Calu3 (cell line): ENCODE measurements at regions of chr20 and their contacts with region 1.

Region 1: GRCh38 chr20:64106981-64107735 is at the start of gene NPBWR2:
- DNase-seq: no peak
- H3K4me3 Mint-ChIP-seq: no peak within 1 kb of the TSS
- H3K27ac Mint-ChIP-seq: no peak within 1 kb of the TSS
- H3K4me1 Mint-ChIP-seq: no peaks in the 10 kb centered on the region
- H3K27me3 Mint-ChIP-seq: peaks cover 94% of the 10 kb centered on the region
- CTCF ChIP-seq: no peak
- total RNA-seq, gene NPBWR2: not detected in 2 replicates

Region 2: GRCh38 chr20:62539198-62540045 is 1567.7 kb before region 1 on chr20:
- CTCF ChIA-PET with region 1: interaction called, 11 read pairs
- intact Hi-C with region 1: no loop called
- DNase-seq: no peak
- H3K4me3 Mint-ChIP-seq: no peak overlapping the region
- H3K27ac Mint-ChIP-seq: no peak overlapping the region
- H3K4me1 Mint-ChIP-seq: no peaks in the 10 kb centered on the region
- H3K27me3 Mint-ChIP-seq: peaks cover 100% of the 10 kb centered on the region
- CTCF ChIP-seq: no peak

Region 3: GRCh38 chr20:63394069-63394919 is 712.9 kb before region 1 on chr20:
- CTCF ChIA-PET with region 1: no interaction called
- intact Hi-C with region 1: no loop called
- DNase-seq: no peak
- H3K4me3 Mint-ChIP-seq: no peak overlapping the region
- H3K27ac Mint-ChIP-seq: no peak overlapping the region
- H3K4me1 Mint-ChIP-seq: no peaks in the 10 kb centered on the region
- H3K27me3 Mint-ChIP-seq: peaks cover 95% of the 10 kb centered on the region
- CTCF ChIP-seq: no peak